Adrenal gland (tissue), 19 donors: ENCODE measurements at regions of chr11 and their contacts with region 1.

Region 1: DNA sequence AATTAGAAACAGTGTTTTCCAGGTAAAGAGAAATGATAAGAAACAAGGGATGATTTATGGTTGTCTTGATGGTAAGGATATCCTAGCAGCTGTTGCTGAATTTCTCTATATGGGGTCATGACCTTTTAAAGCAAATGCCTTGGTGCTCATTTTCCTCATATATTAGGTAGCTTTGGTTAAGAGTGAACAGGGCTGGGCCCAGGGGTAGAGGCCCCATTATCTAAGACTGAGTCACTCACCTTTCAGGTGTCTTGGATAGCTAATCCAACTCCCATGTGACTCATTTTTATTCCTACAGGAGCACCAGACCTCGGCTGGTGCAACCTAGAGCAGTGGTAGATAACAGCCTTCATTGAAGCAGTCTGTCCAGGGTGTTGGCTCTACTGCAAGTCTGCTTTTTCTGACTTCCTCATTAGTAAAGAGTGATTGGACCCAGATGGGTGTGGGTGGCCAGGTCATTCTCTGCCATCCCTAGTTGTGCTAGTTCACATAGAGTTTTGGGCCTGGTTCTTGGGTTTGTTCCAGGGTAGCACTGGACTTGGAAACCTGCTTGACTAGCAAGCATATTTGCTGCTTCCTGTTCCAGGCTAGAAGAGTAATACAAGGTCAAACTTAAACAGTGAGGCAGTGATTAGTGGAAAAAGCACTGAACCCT is 37.4 kb downstream of the CTNND1 start:
- DNase-seq: peak; percentile 33 to 79 (median 61)
- H3K4me3 ChIP-seq: peak overlapping the region in 1 of 4 donors; percentile 10
- H3K27ac ChIP-seq: peak overlapping the region; percentile 11 to 83 (median 43)
- H3K4me1 ChIP-seq: peaks cover 24 to 36% of the 10 kb centered on the region in 2 donors
- H3K27me3 ChIP-seq: no peaks in the 10 kb centered on the region
- CTCF ChIP-seq: no peak
- POLR2A ChIP-seq: no peak

Region 2: DNA sequence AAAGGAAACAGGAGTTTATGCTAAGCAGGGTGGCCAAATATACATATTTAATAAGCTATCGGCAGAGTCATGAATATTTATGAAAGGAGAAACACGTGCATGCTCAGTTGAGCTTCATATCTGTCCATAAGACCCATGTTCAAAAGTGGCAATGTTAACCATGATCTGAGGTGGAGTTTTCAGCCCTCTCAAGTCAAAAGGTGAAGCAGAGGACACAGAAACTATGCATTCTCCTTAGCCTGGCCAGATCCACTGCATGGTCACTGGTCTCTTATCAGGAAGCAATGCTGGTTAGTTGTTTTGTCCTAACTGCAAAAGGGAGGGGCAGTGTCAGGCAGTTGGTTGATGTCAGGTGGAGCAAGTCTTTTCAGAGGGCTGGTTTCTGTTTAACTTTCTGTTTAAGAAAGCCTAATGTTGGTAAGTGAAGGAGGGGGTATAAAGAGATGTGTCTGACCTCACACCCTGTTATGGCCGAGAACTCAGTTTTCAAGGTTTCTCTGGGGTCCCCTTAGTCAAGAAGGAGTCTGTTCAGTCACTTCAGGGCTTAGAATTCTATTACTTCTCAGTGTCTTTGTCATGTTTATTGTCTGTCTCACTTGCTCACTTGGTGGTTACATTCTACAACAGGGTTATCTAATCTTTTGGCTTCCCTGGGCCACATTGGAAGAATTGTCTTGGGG is 63.3 kb before region 1 on chr11:
- intact Hi-C with region 1: no loop called
- DNase-seq: no peak
- H3K4me3 ChIP-seq: no peak overlapping the region
- H3K27ac ChIP-seq: no peak overlapping the region
- H3K4me1 ChIP-seq: peaks cover 2% of the 10 kb centered on the region in 2 donors
- H3K27me3 ChIP-seq: no peaks in the 10 kb centered on the region
- CTCF ChIP-seq: no peak
- POLR2A ChIP-seq: no peak

Region 3: DNA sequence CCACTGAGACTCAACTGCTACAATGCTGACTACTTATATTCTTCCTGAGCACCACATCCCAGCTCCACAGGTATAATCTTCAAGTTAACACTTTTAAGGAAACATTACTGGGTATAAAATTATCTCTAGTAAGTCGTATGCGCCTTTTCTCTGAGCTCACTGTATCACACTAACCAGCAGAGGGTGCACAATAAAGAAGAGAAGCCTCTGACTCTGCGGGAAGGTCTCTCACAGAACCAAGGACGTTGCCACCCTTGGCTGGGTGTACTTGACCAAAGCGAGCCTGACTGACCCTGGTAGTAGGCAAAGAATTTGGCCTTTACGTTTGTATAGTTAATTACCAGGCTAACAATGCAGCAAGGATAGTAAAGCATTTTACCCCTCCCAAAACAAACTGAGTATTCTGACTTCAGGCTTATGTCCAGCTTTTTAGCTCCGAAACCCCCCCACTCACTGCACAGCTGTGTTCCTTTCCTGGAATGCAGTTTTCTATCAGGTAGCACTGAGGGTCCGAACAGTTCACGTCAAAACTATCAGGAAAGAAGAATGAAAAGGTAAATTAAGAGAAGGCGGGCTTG is 47.3 kb before region 1 on chr11 and contains the start of gene BTBD18:
- intact Hi-C with region 1: loop called (anchors 5 kb)
- DNase-seq: peak; percentile 51 to 82 (median 75)
- H3K4me3 ChIP-seq: no peak within 1 kb of the TSS
- H3K27ac ChIP-seq: no peak within 1 kb of the TSS
- H3K4me1 ChIP-seq: peaks cover 4 to 9% of the 10 kb centered on the region in 2 donors
- H3K27me3 ChIP-seq: no peaks in the 10 kb centered on the region
- CTCF ChIP-seq: peak; percentile 19 to 73 (median 68)
- POLR2A ChIP-seq: no peak
- total RNA-seq, gene BTBD18: not detected